ENCODE measurements at regions of chr6 and their contacts with region 1.

Region 1: DNA sequence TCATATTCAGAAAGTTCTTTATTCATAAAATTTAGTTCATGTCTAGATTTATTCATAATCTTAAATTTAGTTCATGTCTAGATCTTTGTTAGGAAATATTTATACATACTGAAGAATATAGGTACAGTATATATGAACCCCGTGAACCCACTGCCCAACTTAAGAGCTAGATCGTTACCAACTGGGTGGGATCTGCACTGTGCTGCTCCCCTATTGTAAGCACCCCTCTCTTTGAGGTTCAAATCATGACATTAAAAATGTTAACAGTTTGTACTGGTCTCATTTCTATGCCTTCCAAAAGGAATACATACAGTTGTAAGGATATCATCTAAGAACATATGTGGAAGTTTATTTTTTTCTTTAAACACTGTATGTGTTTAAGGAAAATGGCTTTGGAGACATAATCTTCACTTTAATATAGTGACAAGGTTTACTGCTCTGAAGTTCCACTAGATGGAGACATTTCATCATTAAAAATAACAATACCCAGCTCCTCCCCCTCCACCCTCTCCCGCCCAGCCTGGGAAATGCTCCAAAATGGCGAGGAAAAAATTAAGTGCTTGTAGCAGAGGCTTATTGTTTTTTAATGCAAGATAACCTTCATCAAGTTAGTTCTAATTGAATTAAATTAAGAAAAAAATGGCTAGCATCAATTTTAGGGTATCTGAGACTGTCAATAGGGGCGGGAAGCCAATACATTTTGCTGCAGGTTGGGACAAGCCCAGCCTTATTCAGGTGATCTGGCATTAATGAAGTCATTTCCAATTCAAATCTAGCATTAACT is 104.1 kb upstream of the TRAF3IP2 start:
- DNase-seq: no peak

Region 2: DNA sequence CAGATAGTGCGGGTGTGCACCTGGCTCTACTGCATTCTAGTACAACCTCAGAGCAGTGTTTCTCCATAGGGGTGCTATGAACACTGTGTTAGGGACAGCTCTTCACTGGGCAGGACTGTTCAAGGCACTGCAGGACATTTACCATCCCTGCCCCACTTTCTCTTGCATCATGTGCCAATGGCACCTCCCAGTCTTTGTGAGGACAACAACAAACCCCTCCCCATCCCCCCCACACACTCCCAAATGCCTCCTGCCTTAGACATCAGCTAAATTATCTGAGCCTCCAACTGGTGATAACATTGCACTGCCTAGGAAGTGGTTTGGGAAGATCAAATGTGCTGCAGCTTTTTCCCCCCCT is 64.5 kb after region 1 on chr6:
- intact Hi-C with region 1: no loop called
- DNase-seq: no peak

Region 3: GRCh38 chr6:111873178-111874024 is 163.6 kb after region 1 on chr6 and contains the start of gene FYN:
- intact Hi-C with region 1: loop called (anchors 10 kb)
- DNase-seq: peak; percentile 99
- total RNA-seq, gene FYN: 87.0 to 94.7 TPM

Region 4: GRCh38 chr6:111997078-111997852 is 287.5 kb after region 1 on chr6:
- intact Hi-C with region 1: loop called (anchors 5 kb)
- DNase-seq: peak; percentile 93

Region 5: DNA sequence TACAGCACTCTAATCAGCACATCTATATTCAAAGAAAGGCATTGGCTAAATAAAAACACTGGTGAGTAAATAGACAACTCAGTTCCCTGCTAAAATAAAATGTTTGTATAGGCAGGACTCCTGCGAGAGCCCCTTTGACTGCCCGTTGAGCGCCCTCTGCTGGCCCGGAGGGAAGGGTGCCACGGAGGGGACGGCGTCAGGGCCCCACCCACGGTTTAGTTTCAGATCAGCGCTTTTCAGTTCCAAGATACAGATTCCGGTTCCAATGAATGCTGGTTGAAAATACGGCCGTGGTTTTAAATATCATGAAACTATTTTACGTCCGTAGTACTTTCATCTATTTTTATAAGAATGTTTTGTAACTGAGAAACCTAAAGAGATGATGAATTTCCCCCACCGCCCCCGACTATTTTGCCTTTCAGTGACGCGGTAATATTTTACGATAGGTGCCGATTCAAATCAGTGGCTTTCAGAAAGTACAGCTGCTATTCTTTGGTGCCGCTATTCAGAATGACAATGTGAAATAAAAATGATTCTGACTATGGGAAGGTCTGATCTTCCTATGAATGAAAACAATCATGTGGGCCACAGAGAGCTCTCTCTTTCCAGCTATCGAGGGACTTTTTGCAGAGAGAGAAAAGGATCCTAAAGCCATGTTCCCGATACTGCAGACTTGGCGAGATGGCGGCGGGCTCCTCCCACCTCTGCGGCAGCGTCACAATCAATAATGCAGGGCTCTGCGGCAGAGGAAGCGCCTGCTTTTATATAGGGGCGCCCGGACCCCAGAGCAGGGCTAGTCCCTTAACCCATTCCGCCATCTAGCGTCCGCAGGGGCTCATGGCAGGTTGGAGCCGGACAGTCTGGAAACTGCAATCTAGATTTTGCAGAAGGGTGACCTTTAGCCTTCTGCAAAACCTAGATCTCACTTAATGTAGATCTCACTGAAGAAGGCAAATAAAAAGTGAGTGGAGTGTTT is 333.5 kb after region 1 on chr6:
- intact Hi-C with region 1: loop called (anchors 5 to 10 kb)
- DNase-seq: peak; percentile 96